ENCODE measurements at regions of chr13 and their contacts with region 1.

Region 1: DNA sequence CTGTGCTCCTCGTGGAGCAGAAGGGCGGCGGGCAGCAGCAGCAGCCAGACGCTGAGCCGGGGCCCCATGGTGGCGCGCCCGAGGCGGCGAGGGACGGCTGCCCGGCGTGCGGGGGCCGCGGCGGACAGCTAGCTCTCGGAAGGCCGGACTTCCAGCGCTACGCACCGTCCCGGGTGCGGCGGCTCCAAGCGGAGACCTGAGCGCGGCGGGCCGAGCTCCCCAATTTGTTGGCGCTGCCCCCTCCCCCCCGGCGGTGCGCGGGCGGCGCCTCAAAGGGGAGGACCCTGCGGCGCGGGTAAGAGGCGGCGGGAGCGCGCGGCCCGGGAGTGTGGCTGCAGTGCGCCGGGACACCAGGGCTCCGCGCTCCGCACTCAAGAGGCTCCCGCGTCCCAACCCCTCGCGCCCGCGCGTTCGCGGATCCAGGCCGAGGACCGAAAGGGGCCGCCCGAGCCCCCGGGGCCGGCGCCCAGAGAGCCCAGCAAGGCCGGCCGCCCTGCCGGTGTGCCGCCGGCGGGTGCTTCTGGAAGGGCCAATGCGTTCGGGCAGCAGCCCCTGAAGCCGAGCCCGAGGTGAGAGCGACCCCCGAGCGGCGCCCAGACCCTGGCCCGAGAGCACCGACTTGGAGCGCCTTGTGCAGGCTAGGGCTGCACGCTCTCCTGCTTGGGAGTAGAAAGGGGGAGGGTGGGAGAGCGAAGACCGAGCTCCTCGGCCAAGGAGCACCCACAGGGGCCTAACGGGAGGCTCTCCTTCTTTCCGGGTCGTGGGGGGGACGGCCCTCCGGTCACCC is at the starts of genes COL4A1 and COL4A2:
- DNase-seq: peak; percentile 83 to 90 (median 89)
- H3K4me3 ChIP-seq: peak within 1 kb of the TSS; percentile 85
- H3K27ac ChIP-seq: peak within 1 kb of the TSS; percentile 87 to 93
- H3K4me1 ChIP-seq: peaks cover 27% of the 10 kb centered on the region
- H3K27me3 ChIP-seq: no peaks in the 10 kb centered on the region
- CTCF ChIP-seq: peak in 2 of 3 donors; percentile 4 to 35
- EP300 ChIP-seq: no peak
- POLR2A ChIP-seq: peak; percentile 93
- total RNA-seq, gene COL4A1: 42.3 to 106 (median 73.2) TPM
- total RNA-seq, gene COL4A2: 59.5 to 171 (median 120) TPM

Region 2: GRCh38 chr13:110126391-110126961 is 180.7 kb before region 1 on chr13:
- intact Hi-C with region 1: no loop called
- DNase-seq: peak in 3 of 5 donors; percentile 37 to 57 (median 40)
- H3K4me3 ChIP-seq: no peak overlapping the region
- H3K27ac ChIP-seq: peak overlapping the region; percentile 20 to 21
- H3K4me1 ChIP-seq: peaks cover 6% of the 10 kb centered on the region
- H3K27me3 ChIP-seq: no peaks in the 10 kb centered on the region
- CTCF ChIP-seq: no peak
- EP300 ChIP-seq: no peak
- POLR2A ChIP-seq: no peak

Region 3: DNA sequence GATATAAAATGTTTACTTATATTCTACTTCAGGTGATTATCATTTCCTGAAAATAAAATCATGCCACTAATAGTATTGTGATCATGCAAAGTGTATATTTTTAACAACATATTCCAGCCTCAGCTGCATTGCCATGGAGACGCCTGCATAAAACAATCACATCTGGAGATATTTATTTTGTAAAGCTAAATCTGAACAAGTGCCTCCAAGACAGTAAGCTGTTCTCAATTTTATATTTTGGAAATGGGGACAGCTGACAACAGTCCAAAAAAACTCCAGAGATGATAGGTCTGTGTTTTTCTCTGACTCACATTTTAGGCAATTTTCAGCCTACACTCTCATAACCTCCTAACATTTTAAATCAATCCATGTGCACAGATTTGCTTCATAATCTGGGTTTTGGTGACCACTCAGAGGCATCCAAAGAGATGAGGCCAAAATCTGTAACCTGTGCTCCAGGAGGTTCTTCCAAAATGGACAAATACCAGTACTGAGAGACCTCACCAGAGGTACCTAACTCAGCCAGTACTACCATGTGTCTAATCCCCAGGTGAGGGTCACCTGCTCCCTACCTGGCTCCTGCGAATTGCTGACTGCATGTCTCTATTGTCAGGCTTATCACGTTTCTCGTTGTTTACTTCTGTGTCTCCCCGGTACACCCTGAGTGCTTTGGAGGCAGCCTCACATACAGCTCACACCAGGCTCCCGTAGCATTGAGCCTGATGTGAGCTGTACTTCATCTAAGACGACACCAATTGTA is 62.9 kb before region 1 on chr13:
- intact Hi-C with region 1: loop called in 2 of 4 experiments (anchors 5 to 10 kb)
- DNase-seq: no peak
- H3K4me3 ChIP-seq: no peak overlapping the region
- H3K27ac ChIP-seq: no peak overlapping the region
- H3K4me1 ChIP-seq: peaks cover 22% of the 10 kb centered on the region
- H3K27me3 ChIP-seq: no peaks in the 10 kb centered on the region
- CTCF ChIP-seq: no peak
- EP300 ChIP-seq: no peak
- POLR2A ChIP-seq: no peak

Region 4: DNA sequence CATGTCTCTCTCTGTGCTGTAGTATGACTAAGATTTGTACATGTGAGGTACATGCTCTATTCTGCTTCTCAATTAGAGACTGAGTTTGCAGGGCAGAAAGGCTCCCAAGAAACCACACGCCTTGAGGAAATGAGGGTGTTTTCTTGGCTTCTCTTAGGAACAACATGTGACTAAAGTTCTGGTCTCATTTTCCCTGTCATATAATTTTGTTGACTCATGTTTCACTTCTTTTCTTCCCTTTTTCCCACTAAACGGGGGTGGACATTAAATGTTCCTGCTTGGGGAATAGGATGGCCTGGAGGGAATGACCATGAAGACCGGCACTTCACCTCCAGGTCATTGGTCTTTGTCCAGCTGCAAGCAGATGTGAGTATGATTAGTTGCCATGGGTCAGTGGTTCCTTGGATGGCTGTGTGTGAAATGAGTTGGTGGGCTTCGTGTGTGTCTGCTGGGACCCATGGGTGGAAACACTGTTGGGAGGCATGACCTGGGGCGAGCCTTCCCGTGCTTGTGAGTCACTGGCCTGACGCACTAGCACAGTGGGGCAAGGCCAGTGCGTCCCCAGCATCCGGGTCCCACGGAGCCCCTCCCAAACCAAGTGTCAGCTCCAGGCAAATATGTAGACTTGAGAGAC is 56.8 kb before region 1 on chr13:
- intact Hi-C with region 1: loop called (anchors 5 to 10 kb)
- DNase-seq: peak in 2 of 5 donors; percentile 48 to 59
- H3K4me3 ChIP-seq: no peak overlapping the region
- H3K27ac ChIP-seq: peak overlapping the region; percentile 54 to 64
- H3K4me1 ChIP-seq: peaks cover 28% of the 10 kb centered on the region
- H3K27me3 ChIP-seq: no peaks in the 10 kb centered on the region
- CTCF ChIP-seq: no peak
- EP300 ChIP-seq: peak; percentile 19
- POLR2A ChIP-seq: no peak